B cell (primary cell): ENCODE measurements at regions of chr5 and their contacts with region 1.

Region 1: DNA sequence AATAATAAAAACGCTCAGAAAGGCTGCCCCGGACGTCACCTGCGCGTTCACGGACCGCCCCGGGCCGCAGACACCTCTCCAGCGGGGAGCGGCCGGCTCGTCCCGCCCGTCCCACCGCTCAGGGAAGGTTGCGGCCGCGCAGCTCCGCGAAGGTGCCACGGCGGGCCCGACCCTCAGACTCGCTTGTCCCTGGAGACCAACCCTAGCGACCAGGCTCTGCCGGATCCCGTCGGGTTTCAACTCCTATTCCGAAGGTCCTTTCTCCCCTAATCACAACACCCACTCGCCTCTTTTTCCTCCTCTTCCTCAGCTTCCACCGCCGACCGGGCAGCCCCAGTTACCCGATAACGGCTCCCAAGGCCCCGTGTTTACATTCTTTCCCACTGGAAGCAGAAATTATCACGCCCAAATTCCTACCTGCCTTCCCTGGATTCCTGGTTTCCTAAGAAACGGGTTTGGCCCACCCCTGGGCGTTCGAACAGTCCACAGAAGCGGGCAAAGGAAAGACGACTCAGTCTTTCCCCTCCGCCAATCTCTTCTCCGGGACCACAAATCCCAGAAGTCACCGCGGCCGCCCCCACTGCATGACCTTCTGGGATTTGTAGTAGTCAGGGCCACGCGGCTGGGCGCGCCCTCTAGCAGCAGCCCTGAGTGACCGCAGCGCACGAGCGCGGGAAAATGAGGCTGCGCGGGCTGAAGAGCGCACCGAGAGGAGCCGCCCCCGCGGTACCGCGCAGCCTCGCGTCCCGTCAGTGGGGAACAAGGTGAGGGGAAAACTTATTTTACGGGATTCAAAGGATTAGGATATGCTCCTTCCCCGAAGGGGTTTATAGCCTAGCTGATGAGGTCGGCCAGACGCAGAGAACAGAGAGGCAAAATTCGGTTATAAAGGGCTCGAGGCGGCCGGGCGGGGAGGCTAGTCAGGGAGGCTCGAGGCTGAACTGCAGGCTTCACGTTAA is at the start of gene TTC33:
- DNase-seq: peak; percentile 92
- ATAC-seq: peak; percentile 94
- H3K4me3 ChIP-seq: peak within 1 kb of the TSS; percentile 78 to 100 (median 95)
- H3K4me3 Mint-ChIP-seq: no peak within 1 kb of the TSS
- H3K27ac ChIP-seq: peak within 1 kb of the TSS; percentile 77 to 92
- H3K27ac Mint-ChIP-seq: no peak within 1 kb of the TSS
- H3K4me1 ChIP-seq: peaks cover 10 to 13% of the 10 kb centered on the region in 2 donors
- H3K4me1 Mint-ChIP-seq: peaks cover 16% of the 10 kb centered on the region
- H3K27me3 ChIP-seq: no peaks in the 10 kb centered on the region
- H3K27me3 Mint-ChIP-seq: no peaks in the 10 kb centered on the region
- CTCF ChIP-seq: peak; percentile 63
- total RNA-seq, gene TTC33: 15.8 and 18.2 TPM in 2 replicates

Region 2: GRCh38 chr5:39274398-39275085 is 1481.1 kb before region 1 on chr5:
- CTCF ChIA-PET with region 1: no interaction called
- POLR2A ChIA-PET with region 1: no interaction called
- intact Hi-C with region 1: loop called (anchors 10 kb)
- DNase-seq: peak; percentile 64
- ATAC-seq: peak; percentile 78
- H3K4me3 ChIP-seq: peak overlapping the region; percentile 12 to 63 (median 41)
- H3K4me3 Mint-ChIP-seq: peak overlapping the region; percentile 87
- H3K27ac ChIP-seq: peak overlapping the region; percentile 81 to 83
- H3K27ac Mint-ChIP-seq: peak overlapping the region; percentile 93
- H3K4me1 ChIP-seq: peaks cover 29 to 30% of the 10 kb centered on the region in 2 donors
- H3K4me1 Mint-ChIP-seq: peaks cover 32% of the 10 kb centered on the region
- H3K27me3 ChIP-seq: no peaks in the 10 kb centered on the region
- H3K27me3 Mint-ChIP-seq: no peaks in the 10 kb centered on the region
- CTCF ChIP-seq: no peak

Region 3: GRCh38 chr5:40798012-40798855 is 42.5 kb after region 1 on chr5 and contains the start of gene PRKAA1:
- CTCF ChIA-PET with region 1: interaction called, 3 read pairs
- POLR2A ChIA-PET with region 1: interaction called, 3 read pairs
- intact Hi-C with region 1: loop called (anchors 1 kb)
- DNase-seq: peak; percentile 93
- ATAC-seq: peak; percentile 95
- H3K4me3 ChIP-seq: peak within 1 kb of the TSS; percentile 68 to 98 (median 82)
- H3K4me3 Mint-ChIP-seq: peak within 1 kb of the TSS; percentile 82
- H3K27ac ChIP-seq: peak within 1 kb of the TSS; percentile 87 to 94
- H3K27ac Mint-ChIP-seq: peak within 1 kb of the TSS; percentile 94
- H3K4me1 ChIP-seq: peaks cover 15 to 23% of the 10 kb centered on the region in 2 donors
- H3K4me1 Mint-ChIP-seq: peaks cover 39% of the 10 kb centered on the region
- H3K27me3 ChIP-seq: no peaks in the 10 kb centered on the region
- H3K27me3 Mint-ChIP-seq: no peaks in the 10 kb centered on the region
- CTCF ChIP-seq: peak; percentile 81
- total RNA-seq, gene PRKAA1: 103 and 107 TPM in 2 replicates

Region 4: DNA sequence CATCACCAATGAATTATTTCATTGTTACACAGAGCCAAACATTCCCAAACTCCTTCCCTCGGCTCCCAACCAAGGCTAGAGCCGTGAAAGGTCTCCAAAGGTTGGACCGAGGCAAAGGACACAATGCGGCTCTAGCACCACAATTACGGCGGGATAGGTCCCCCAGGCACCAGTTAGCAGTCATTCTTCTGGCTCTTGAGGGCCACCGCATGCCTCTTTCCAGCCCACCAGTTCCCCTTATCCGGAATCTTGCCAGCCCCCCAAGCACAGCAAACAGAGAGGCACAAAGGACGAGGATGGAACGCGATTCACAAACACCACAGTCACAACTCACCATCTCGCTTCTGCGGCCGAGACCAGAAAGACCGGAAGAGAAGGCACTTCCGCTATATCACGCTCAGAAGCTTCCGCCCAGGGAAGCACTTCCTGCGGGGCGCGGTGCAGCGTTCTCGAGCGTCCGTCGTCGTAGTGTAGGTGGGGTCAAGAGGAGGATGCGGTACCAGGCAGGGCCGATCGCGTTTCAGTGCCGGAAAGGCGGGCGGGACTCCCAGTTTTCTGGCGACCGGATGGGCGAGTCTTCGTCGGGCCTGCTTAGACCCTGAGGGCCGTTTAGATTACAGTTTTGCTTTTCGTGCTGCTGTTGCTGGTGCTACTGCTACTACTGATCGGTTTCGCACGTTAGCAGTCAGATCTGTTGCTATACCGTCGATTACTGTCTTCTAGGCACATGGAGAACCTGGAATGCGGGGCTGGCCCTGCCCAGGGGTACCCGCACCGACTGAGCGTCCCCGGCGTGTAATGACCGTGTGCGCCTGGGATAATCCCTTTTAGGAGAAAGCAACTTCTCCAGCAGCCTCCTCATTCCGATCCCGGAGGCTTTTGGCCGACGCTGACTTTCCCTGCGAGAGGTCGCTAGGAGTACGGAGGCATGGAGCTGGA is 79.4 kb after region 1 on chr5 and contains the start of gene RPL37:
- CTCF ChIA-PET with region 1: interaction called, 3 read pairs
- POLR2A ChIA-PET with region 1: no interaction called
- intact Hi-C with region 1: loop called (anchors 1 kb)
- DNase-seq: peak; percentile 95
- ATAC-seq: peak; percentile 98
- H3K4me3 ChIP-seq: peak within 1 kb of the TSS; percentile 74 to 99 (median 89)
- H3K4me3 Mint-ChIP-seq: peak within 1 kb of the TSS; percentile 99
- H3K27ac ChIP-seq: peak within 1 kb of the TSS; percentile 85 to 91
- H3K27ac Mint-ChIP-seq: peak within 1 kb of the TSS; percentile 98
- H3K4me1 ChIP-seq: peaks cover 21 to 23% of the 10 kb centered on the region in 2 donors
- H3K4me1 Mint-ChIP-seq: peaks cover 43% of the 10 kb centered on the region
- H3K27me3 ChIP-seq: no peaks in the 10 kb centered on the region
- H3K27me3 Mint-ChIP-seq: no peaks in the 10 kb centered on the region
- CTCF ChIP-seq: no peak
- total RNA-seq, gene RPL37: 1,932 and 2,240 TPM in 2 replicates

Region 5: DNA sequence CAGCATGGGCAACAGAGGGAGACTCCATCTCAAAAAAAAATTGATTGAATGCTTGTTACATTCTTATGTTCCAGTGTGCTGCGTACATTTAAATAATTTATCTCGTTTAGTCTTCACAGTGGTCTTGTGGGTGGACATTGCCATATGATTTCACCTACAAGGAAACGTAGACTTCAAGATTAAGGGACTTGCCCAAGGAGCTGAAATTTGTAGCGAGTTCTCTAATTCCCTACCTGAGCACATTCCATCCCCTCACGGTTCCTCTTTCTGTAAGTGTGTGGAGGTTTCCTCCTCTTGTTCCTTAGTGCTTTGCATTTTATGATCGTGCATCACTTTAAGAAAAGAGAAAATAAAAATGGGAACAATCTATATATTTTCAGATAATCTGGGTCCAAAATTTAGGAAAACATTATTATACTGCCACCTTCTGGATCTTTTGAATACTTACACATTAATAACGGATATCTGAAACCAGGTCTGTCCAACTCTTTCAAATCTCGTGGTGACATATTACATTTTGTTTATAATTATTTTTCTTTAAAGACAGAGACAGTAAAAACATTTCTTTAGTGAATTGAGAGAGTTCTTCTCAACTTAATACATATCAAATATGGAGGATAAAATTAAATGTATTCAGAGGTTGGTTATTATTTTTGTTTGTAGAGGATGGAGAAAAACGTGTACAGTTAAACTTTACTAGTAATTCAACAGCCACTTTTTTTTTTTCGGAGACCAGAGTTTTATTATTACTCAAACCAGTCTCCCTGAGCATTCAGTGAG is 123.7 kb after region 1 on chr5:
- CTCF ChIA-PET with region 1: interaction called, 5 read pairs
- POLR2A ChIA-PET with region 1: no interaction called
- intact Hi-C with region 1: loop called (anchors 2 kb)
- DNase-seq: peak; percentile 36
- ATAC-seq: peak; percentile 36
- H3K4me3 ChIP-seq: no peak overlapping the region
- H3K4me3 Mint-ChIP-seq: no peak overlapping the region
- H3K27ac ChIP-seq: no peak overlapping the region
- H3K27ac Mint-ChIP-seq: no peak overlapping the region
- H3K4me1 ChIP-seq: no peaks in the 10 kb centered on the region
- H3K4me1 Mint-ChIP-seq: no peaks in the 10 kb centered on the region
- H3K27me3 ChIP-seq: peaks cover 0 to 5% (median 0%) of the 10 kb centered on the region in 4 experiments
- H3K27me3 Mint-ChIP-seq: peaks cover 20% of the 10 kb centered on the region
- CTCF ChIP-seq: peak; percentile 83

Region 6: GRCh38 chr5:41903892-41904799 is 1148.5 kb after region 1 on chr5 and contains the start of gene RIMOC1:
- CTCF ChIA-PET with region 1: no interaction called
- POLR2A ChIA-PET with region 1: no interaction called
- intact Hi-C with region 1: loop called (anchors 1 kb)
- DNase-seq: peak; percentile 98
- ATAC-seq: peak; percentile 89
- H3K4me3 ChIP-seq: peak within 1 kb of the TSS; percentile 34 to 90 (median 80)
- H3K4me3 Mint-ChIP-seq: peak within 1 kb of the TSS; percentile 96
- H3K27ac ChIP-seq: peak within 1 kb of the TSS; percentile 89 to 98
- H3K27ac Mint-ChIP-seq: peak within 1 kb of the TSS; percentile 98
- H3K4me1 ChIP-seq: peaks cover 15 to 17% of the 10 kb centered on the region in 2 donors
- H3K4me1 Mint-ChIP-seq: peaks cover 34% of the 10 kb centered on the region
- H3K27me3 ChIP-seq: peaks cover 0 to 3% (median 1%) of the 10 kb centered on the region in 4 experiments
- H3K27me3 Mint-ChIP-seq: peaks cover 8% of the 10 kb centered on the region
- CTCF ChIP-seq: no peak
- total RNA-seq, gene RIMOC1: 32.1 and 33.1 TPM in 2 replicates